CD8-positive, alpha-beta T cell (primary cell): ENCODE measurements at regions of chr22 and their contacts with region 1.

Region 1: DNA sequence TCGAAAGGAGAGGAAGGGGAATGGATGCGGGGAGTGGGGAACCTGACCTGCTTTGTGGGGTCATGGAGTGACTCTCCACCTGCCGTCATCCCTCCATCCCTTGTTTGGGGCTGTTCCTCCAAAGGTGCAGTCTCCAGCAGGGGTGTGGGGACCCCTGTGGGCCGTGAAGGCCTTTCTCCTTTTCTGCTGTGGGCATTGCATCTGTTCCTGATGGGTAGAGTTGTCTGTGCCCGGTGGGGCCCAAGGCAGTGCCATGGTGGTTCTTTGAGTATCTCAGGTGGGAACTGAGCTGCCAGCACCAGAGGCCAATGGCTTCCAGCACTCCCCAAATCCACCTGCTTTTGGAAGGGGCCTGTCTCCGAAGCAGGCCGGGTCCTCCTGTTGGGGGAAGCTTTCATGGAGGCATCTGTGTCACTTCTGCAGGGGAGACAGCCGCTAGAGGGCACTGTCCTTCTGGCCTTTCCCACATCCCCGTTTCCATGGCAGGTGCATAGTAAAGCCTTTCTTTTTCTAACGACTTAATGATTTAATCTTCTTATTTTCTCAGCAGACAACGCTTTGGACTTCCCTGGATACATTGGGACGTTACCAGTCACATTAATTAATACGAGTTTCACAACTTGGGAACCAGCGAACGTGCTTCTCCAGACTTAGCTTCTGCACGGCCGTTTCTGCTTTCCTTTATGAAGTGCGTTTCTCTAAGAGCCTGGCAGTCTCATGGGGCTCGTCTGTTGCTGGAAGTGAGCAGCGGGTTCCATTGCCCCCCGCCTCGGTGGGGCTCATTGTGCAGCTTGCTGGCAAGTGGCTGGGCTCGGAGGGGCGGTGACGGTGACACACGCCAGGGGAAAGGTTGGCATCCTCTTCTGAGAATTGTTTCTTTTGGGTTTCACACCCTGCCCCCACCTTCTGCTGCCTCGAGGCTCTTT is 57.1 kb downstream of the PARVB start:
- DNase-seq: peak; percentile 46 to 83 (median 75)
- ATAC-seq: peak; percentile 57
- H3K4me3 ChIP-seq: peak overlapping the region in 1 of 2 experiments; percentile 33
- H3K4me3 Mint-ChIP-seq: no peak overlapping the region
- H3K27ac ChIP-seq: no peak overlapping the region
- H3K27ac Mint-ChIP-seq: no peak overlapping the region
- H3K4me1 ChIP-seq: peaks cover 4% of the 10 kb centered on the region
- H3K4me1 Mint-ChIP-seq: no peaks in the 10 kb centered on the region
- H3K27me3 ChIP-seq: no peaks in the 10 kb centered on the region
- H3K27me3 Mint-ChIP-seq: no peaks in the 10 kb centered on the region
- CTCF ChIP-seq: peak; percentile 69

Region 2: DNA sequence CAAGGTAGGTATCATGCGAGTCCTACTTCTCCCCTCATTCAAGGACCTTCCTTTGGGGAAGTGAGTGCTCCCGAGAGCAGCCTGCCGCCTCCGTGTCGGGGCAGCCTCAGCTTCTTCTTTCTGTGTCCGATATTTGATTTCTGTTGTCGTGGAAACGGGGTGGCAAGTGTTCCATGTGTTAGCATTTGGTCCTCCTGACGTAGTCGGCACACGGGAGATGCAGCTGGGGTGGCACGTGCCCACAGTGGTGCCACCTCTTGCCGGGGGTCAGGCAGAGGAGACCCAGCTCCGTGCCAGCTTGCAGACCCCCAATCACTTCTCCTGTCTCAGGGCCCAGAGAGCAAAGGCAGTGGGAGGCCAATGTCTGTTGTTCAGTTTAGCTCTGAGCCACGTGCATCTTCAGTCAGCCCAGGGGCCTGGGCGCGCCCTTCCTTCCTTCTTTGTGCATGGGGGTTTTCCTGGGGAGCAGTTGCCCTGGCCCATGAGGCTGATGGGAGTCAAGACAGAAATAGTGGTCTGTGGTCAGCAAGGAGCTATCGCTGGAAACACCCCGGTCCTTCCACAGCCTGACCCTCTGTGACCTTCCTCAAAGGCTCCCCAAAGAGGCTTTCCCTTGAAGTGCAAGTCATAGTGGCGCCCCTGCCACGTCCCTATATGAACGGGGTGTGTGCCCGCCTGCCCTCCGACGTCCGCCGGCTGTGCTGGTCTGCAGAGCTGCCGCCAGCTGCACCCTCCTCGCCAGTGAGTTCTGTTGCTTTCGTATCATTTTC is 12.6 kb before region 1 on chr22:
- CTCF ChIA-PET with region 1: interaction called, 26 read pairs
- POLR2A ChIA-PET with region 1: no interaction called
- intact Hi-C with region 1: no loop called
- DNase-seq: peak in 2 of 9 experiments; percentile 17 to 57
- ATAC-seq: no peak
- H3K4me3 ChIP-seq: no peak overlapping the region
- H3K4me3 Mint-ChIP-seq: no peak overlapping the region
- H3K27ac ChIP-seq: no peak overlapping the region
- H3K27ac Mint-ChIP-seq: no peak overlapping the region
- H3K4me1 ChIP-seq: no peaks in the 10 kb centered on the region
- H3K4me1 Mint-ChIP-seq: peaks cover 3% of the 10 kb centered on the region
- H3K27me3 ChIP-seq: no peaks in the 10 kb centered on the region
- H3K27me3 Mint-ChIP-seq: peaks cover 3% of the 10 kb centered on the region
- CTCF ChIP-seq: no peak

Region 3: GRCh38 chr22:44567846-44568493 is 486.8 kb after region 1 on chr22:
- CTCF ChIA-PET with region 1: interaction called, 10 read pairs
- POLR2A ChIA-PET with region 1: no interaction called
- intact Hi-C with region 1: loop called (anchors 1 to 2 kb)
- DNase-seq: peak; percentile 16 to 72 (median 57)
- ATAC-seq: no peak
- H3K4me3 ChIP-seq: no peak overlapping the region
- H3K4me3 Mint-ChIP-seq: no peak overlapping the region
- H3K27ac ChIP-seq: no peak overlapping the region
- H3K27ac Mint-ChIP-seq: no peak overlapping the region
- H3K4me1 ChIP-seq: no peaks in the 10 kb centered on the region
- H3K4me1 Mint-ChIP-seq: no peaks in the 10 kb centered on the region
- H3K27me3 ChIP-seq: no peaks in the 10 kb centered on the region
- H3K27me3 Mint-ChIP-seq: peaks cover 7% of the 10 kb centered on the region
- CTCF ChIP-seq: peak; percentile 49